ENCODE measurements at regions of chr12 and their contacts with region 1.

Region 1: DNA sequence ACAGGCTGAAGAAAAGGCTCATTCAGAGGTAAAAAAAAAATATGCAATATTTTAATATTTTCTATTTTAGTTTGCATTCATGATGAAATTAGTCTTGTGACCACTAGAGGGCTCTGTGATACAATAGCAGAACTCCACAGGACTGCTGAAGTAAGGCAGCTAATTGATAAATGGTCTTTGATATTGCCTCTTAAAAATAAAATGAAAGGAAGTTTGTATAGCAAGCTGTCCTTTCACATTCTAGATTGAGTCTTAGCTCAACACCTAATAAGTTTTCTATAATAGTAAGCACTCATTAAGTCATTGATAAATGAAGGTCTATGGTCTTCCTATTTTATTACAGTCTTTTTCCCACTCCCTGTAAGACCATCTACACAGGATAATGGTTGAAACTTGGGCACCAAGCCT is 315.7 kb downstream of the NAV3 start:
- DNase-seq: peak; percentile 11
- H3K4me3 ChIP-seq: no peak overlapping the region
- H3K27ac ChIP-seq: no peak overlapping the region
- H3K27me3 ChIP-seq: no peaks in the 10 kb centered on the region
- CTCF ChIP-seq: peak; percentile 80

Region 2: DNA sequence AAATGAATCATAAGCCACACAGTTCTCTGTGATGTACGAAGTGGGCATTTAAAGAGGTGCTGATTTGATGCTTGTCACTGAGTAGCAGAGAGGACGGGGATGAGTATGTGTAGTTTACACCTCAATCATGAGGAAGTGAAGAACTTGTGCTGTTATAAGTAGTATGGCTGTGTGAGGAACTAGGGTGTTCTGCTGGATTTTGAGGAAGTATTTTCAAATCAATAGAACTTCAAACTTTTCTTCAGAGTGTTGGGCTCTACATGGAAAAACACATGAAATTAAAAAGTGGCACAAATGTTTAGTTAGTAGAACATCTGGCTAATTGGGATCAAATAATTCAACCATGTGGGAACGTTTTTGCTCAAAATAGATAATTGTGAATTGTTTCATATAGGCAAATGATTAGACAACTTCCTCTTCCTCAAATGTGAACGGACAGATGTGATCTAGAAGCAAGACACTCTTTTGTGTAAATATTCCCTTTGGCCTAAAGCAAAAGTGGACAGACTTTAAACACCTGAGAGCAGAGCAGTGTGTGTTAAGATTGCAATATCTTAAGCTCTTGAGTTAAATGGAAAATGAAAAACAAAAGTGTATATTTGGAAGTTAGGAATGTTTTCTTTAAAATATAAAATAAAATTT is 147.2 kb before region 1 on chr12:
- CTCF ChIA-PET with region 1: interaction called, 12 read pairs
- POLR2A ChIA-PET with region 1: no interaction called
- DNase-seq: no peak
- H3K4me3 ChIP-seq: no peak overlapping the region
- H3K27ac ChIP-seq: no peak overlapping the region
- H3K27me3 ChIP-seq: no peaks in the 10 kb centered on the region
- CTCF ChIP-seq: no peak

Region 3: GRCh38 chr12:78060186-78060585 is 86.2 kb before region 1 on chr12:
- CTCF ChIA-PET with region 1: no interaction called
- POLR2A ChIA-PET with region 1: no interaction called
- DNase-seq: peak; percentile 34
- H3K4me3 ChIP-seq: no peak overlapping the region
- H3K27ac ChIP-seq: no peak overlapping the region
- H3K27me3 ChIP-seq: no peaks in the 10 kb centered on the region
- CTCF ChIP-seq: no peak

Region 4: GRCh38 chr12:78128211-78128610 is 18.2 kb before region 1 on chr12:
- CTCF ChIA-PET with region 1: interaction called, 11 read pairs
- POLR2A ChIA-PET with region 1: no interaction called
- DNase-seq: no peak
- H3K4me3 ChIP-seq: no peak overlapping the region
- H3K27ac ChIP-seq: no peak overlapping the region
- H3K27me3 ChIP-seq: no peaks in the 10 kb centered on the region
- CTCF ChIP-seq: no peak

Region 5: GRCh38 chr12:78157199-78157598 is 10.8 kb after region 1 on chr12:
- CTCF ChIA-PET with region 1: interaction called, 11 read pairs
- POLR2A ChIA-PET with region 1: no interaction called
- DNase-seq: no peak
- H3K4me3 ChIP-seq: no peak overlapping the region
- H3K27ac ChIP-seq: peak overlapping the region; percentile 31
- H3K27me3 ChIP-seq: no peaks in the 10 kb centered on the region
- CTCF ChIP-seq: no peak

Region 6: GRCh38 chr12:78171061-78171460 is 24.7 kb after region 1 on chr12:
- CTCF ChIA-PET with region 1: interaction called, 12 read pairs
- POLR2A ChIA-PET with region 1: no interaction called
- DNase-seq: no peak
- H3K4me3 ChIP-seq: no peak overlapping the region
- H3K27ac ChIP-seq: no peak overlapping the region
- H3K27me3 ChIP-seq: no peaks in the 10 kb centered on the region
- CTCF ChIP-seq: no peak

Region 7: GRCh38 chr12:78229591-78230101 is 83.3 kb after region 1 on chr12:
- CTCF ChIA-PET with region 1: no interaction called
- POLR2A ChIA-PET with region 1: no interaction called
- DNase-seq: no peak
- H3K4me3 ChIP-seq: no peak overlapping the region
- H3K27ac ChIP-seq: no peak overlapping the region
- H3K27me3 ChIP-seq: no peaks in the 10 kb centered on the region
- CTCF ChIP-seq: peak; percentile 67